ENCODE measurements at regions of chr2 and their contacts with region 1.

Region 1: GRCh38 chr2:161373942-161374341 is 42.2 kb upstream of the TBR1 start:
- DNase-seq: peak; percentile 26
- H3K4me3 ChIP-seq: no peak overlapping the region
- H3K27ac ChIP-seq: no peak overlapping the region
- H3K4me1 ChIP-seq: peaks cover 56% of the 10 kb centered on the region
- H3K27me3 ChIP-seq: no peaks in the 10 kb centered on the region
- CTCF ChIP-seq: no peak

Region 2: DNA sequence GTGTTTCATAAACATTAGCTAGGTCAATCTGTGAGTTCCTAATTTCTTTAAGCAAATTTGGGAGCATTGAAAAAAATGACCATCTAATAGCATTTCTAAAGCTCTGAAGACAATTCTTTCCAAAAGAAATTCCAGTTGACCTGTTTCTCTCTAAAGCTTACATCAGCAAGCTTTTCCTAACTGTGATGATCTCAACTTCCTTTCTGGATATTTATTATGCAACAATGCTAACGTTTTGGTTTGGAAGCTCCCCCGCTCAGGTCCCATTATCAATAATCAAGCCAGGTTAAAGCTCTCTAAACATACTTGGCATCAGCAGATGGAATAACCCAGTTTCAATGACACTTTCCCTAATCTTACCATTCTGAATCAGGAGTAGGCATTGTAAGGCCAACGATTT is 410.0 kb before region 1 on chr2:
- CTCF ChIA-PET with region 1: no interaction called
- POLR2A ChIA-PET with region 1: no interaction called
- intact Hi-C with region 1: no loop called
- DNase-seq: no peak
- H3K4me3 ChIP-seq: no peak overlapping the region
- H3K27ac ChIP-seq: no peak overlapping the region
- H3K4me1 ChIP-seq: no peaks in the 10 kb centered on the region
- H3K27me3 ChIP-seq: no peaks in the 10 kb centered on the region
- CTCF ChIP-seq: no peak

Region 3: DNA sequence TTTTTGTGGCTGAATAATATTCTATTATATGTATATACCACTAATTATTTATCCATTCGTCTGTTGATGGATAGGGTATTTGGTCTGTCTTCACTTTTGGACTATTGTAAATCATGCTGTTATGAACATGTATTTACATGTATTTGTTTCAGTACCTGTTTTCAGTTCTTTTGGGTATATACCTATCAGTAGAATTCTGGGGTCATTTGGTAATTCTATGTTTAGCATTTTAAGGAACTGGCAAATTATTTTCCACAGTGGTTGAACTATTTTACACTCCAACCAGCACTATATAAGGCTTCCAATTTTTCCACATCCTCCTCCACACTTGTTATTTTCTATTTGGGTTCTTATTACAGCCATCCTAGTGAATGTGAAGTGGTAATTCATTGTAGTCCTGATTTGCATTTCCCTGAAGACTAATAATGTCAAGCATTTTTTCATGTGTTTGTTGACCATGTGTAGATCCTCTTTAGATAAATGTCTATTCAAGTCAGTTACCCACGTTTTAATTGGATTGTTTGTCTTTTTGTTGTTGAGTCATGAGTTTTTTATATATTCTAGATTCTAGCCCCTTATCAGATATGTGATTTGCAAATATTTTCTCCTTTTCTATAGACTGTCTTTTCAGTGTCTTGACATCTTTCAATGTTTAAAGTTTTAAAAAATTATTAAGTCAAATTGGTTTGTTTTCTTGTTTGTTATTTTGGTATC is 225.9 kb before region 1 on chr2:
- CTCF ChIA-PET with region 1: no interaction called
- POLR2A ChIA-PET with region 1: interaction called, 21 read pairs
- intact Hi-C with region 1: no loop called
- DNase-seq: no peak
- H3K4me3 ChIP-seq: no peak overlapping the region
- H3K27ac ChIP-seq: no peak overlapping the region
- H3K4me1 ChIP-seq: no peaks in the 10 kb centered on the region
- H3K27me3 ChIP-seq: no peaks in the 10 kb centered on the region
- CTCF ChIP-seq: no peak

Region 4: GRCh38 chr2:161199912-161200701 is 173.8 kb before region 1 on chr2:
- CTCF ChIA-PET with region 1: no interaction called
- POLR2A ChIA-PET with region 1: no interaction called
- intact Hi-C with region 1: no loop called
- DNase-seq: no peak
- H3K4me3 ChIP-seq: no peak overlapping the region
- H3K27ac ChIP-seq: no peak overlapping the region
- H3K4me1 ChIP-seq: no peaks in the 10 kb centered on the region
- H3K27me3 ChIP-seq: no peaks in the 10 kb centered on the region
- CTCF ChIP-seq: no peak

Region 5: DNA sequence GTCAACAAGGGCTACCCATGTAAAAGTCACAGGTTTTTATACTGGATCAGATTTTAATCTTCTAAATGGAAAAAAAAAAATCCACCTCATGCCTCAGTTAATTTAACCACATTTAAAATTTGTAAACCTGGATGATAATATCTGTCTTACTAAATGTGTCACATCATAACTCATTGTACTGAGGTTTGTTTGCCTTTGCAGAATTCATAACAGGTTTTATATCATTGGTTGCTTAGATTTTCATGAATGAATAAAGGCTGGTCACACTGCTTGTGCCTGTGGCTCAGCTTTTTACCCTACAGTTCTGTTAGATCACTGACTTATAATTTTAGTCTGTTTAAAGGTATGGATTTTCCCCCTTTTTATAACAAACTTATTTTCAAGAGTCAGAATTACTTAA is 16.8 kb before region 1 on chr2:
- CTCF ChIA-PET with region 1: no interaction called
- POLR2A ChIA-PET with region 1: interaction called, 8 read pairs
- intact Hi-C with region 1: loop called (anchors 2 kb)
- DNase-seq: no peak
- H3K4me3 ChIP-seq: no peak overlapping the region
- H3K27ac ChIP-seq: no peak overlapping the region
- H3K4me1 ChIP-seq: peaks cover 28% of the 10 kb centered on the region
- H3K27me3 ChIP-seq: no peaks in the 10 kb centered on the region
- CTCF ChIP-seq: no peak

Region 6: DNA sequence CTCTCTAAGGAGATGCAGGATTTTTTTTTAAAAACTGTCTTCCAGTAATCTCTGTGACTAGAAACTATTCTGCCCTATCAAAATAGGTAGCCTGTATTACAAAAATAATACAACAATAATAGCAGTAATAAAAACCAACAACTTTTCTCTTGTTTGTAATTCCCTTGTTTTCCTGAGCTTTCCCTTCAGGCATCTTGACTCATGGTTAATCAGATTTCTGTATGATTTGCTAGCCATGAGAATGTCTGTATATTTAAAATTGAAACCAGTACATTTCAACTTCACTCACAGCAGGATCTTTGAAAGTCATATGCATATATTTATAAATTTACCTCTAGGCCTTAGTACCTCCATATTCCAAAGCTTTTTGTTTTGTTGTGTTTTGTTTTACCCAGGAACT is 288.4 kb after region 1 on chr2:
- CTCF ChIA-PET with region 1: no interaction called
- POLR2A ChIA-PET with region 1: no interaction called
- intact Hi-C with region 1: no loop called
- DNase-seq: no peak
- H3K4me3 ChIP-seq: no peak overlapping the region
- H3K27ac ChIP-seq: no peak overlapping the region
- H3K4me1 ChIP-seq: peaks cover 3% of the 10 kb centered on the region
- H3K27me3 ChIP-seq: no peaks in the 10 kb centered on the region
- CTCF ChIP-seq: no peak

Measured in A673 (cell line).